ENCODE measurements at regions of chr6 and their contacts with region 1.

Region 1: DNA sequence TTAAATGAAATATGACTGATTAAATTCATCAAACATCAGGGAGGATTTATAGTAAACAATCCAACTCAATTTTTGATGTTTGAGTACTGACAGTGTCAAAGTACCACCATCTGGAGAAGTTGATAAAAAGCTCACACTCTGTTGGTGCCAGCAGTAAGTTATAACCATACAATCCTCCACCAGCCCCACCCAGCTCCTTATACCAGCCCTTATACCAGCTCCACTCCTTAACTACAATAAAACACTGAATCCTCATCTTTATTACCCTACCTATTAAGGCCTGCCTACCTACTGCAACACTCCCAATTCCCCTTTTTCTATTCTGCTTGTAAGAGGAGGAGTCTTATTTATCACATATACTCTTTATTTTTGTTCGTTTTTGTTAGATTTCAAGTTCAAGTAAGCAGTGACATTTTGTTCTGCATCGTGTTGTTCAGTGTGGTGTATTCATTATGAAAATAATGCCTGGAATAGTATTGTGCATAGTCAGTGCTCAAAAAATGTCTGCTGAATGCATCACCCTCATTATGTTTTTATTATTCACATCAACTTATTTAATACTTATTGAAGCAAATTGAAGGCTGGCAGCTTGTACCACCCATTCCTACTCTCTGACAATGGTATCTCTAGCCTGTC is 954.7 kb upstream of the ADGRB3 start:
- DNase-seq: no peak
- H3K4me3 Mint-ChIP-seq: no peak overlapping the region
- H3K27ac Mint-ChIP-seq: peak overlapping the region; percentile 56
- H3K4me1 Mint-ChIP-seq: peaks cover 14% of the 10 kb centered on the region
- H3K27me3 Mint-ChIP-seq: no peaks in the 10 kb centered on the region
- CTCF ChIP-seq: no peak

Region 2: GRCh38 chr6:67411036-67411435 is 269.4 kb before region 1 on chr6:
- CTCF ChIA-PET with region 1: no interaction called
- POLR2A ChIA-PET with region 1: no interaction called
- intact Hi-C with region 1: no loop called
- DNase-seq: no peak
- H3K4me3 Mint-ChIP-seq: no peak overlapping the region
- H3K27ac Mint-ChIP-seq: no peak overlapping the region
- H3K4me1 Mint-ChIP-seq: peaks cover 11% of the 10 kb centered on the region
- H3K27me3 Mint-ChIP-seq: no peaks in the 10 kb centered on the region
- CTCF ChIP-seq: no peak

Region 3: GRCh38 chr6:67642582-67642981 is 37.8 kb before region 1 on chr6:
- CTCF ChIA-PET with region 1: interaction called, 3 read pairs
- POLR2A ChIA-PET with region 1: no interaction called
- intact Hi-C with region 1: loop called (anchors 2 kb)
- DNase-seq: no peak
- H3K4me3 Mint-ChIP-seq: no peak overlapping the region
- H3K27ac Mint-ChIP-seq: no peak overlapping the region
- H3K4me1 Mint-ChIP-seq: peaks cover 6% of the 10 kb centered on the region
- H3K27me3 Mint-ChIP-seq: no peaks in the 10 kb centered on the region
- CTCF ChIP-seq: no peak

Region 4: DNA sequence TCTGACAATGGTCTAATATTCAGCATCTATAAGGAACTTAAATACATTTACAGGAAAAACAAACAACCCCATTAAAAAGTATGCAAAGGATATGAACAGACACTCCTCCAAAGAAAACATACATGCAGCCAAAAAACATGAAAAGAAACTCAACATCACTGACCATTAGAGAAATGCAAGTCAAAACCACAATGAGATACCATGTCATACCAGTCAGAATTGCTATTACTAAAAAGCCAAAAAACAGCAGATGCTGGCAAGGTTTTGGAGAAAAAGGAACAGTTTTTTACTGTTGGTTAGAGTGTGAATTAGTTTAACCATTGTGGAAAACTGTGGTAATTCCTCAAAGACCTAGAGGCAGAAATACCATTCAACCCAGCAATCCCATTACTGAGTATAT is 615.7 kb after region 1 on chr6:
- CTCF ChIA-PET with region 1: no interaction called
- POLR2A ChIA-PET with region 1: no interaction called
- intact Hi-C with region 1: no loop called
- DNase-seq: no peak
- H3K4me3 Mint-ChIP-seq: no peak overlapping the region
- H3K27ac Mint-ChIP-seq: no peak overlapping the region
- H3K4me1 Mint-ChIP-seq: no peaks in the 10 kb centered on the region
- H3K27me3 Mint-ChIP-seq: no peaks in the 10 kb centered on the region
- CTCF ChIP-seq: no peak